ENCODE measurements at regions of chr7 and their contacts with region 1.

Region 1: DNA sequence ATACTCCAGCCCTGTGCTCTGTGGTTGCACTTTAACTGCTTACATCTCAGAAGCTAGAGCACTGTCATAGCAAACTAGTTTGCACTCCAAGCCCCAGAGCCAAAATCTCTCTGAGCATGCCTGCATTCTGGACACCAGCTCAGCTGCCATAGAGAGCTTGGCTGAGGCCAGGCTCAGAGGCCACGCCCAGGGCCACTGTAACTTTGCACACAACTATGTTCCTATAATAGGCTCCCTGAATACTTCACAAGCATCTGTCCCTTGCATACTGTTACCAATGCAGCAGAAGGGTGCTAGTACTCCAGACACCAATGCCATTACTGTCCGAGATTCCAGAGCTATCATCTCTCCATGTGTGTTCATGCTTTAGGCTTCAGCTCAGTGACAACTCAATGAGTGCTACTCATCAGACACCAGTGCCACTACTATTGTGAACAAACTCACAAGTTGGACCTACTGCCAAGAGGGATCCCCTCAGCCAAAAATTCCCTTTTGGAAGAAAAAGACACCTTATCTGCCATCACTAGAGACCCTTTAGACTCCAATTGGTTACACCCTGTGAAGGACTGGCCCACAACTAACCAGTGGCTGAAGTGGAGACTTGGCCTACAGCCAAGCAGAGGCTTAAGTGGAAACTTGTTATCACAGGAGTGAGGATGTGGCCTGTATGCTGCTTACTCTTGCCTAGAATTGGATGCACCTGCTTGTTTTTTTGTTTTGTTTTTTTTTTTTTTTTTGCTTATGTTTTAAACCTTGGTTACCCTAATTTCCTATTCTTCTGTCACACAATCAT is 211.6 kb upstream of the MAGI2 start:
- DNase-seq: no peak
- ATAC-seq: no peak
- H3K4me3 ChIP-seq: no peak overlapping the region
- H3K4me3 Mint-ChIP-seq: no peak overlapping the region
- H3K27ac ChIP-seq: no peak overlapping the region
- H3K27ac Mint-ChIP-seq: no peak overlapping the region
- H3K4me1 ChIP-seq: no peaks in the 10 kb centered on the region
- H3K4me1 Mint-ChIP-seq: no peaks in the 10 kb centered on the region
- H3K27me3 ChIP-seq: no peaks in the 10 kb centered on the region
- H3K27me3 Mint-ChIP-seq: no peaks in the 10 kb centered on the region

Region 2: GRCh38 chr7:79608005-79608404 is 57.1 kb before region 1 on chr7:
- CTCF ChIA-PET with region 1: no interaction called
- POLR2A ChIA-PET with region 1: no interaction called
- intact Hi-C with region 1: loop called in 1 of 2 experiments (anchors 10 kb)
- DNase-seq: no peak
- ATAC-seq: no peak
- H3K4me3 ChIP-seq: no peak overlapping the region
- H3K4me3 Mint-ChIP-seq: no peak overlapping the region
- H3K27ac ChIP-seq: no peak overlapping the region
- H3K27ac Mint-ChIP-seq: no peak overlapping the region
- H3K4me1 ChIP-seq: no peaks in the 10 kb centered on the region
- H3K4me1 Mint-ChIP-seq: no peaks in the 10 kb centered on the region
- H3K27me3 ChIP-seq: no peaks in the 10 kb centered on the region
- H3K27me3 Mint-ChIP-seq: no peaks in the 10 kb centered on the region

Measured in naive thymus-derived CD4-positive, alpha-beta T cell (primary cell).